ENCODE measurements at regions of chr19 and their contacts with region 1.

Region 1: DNA sequence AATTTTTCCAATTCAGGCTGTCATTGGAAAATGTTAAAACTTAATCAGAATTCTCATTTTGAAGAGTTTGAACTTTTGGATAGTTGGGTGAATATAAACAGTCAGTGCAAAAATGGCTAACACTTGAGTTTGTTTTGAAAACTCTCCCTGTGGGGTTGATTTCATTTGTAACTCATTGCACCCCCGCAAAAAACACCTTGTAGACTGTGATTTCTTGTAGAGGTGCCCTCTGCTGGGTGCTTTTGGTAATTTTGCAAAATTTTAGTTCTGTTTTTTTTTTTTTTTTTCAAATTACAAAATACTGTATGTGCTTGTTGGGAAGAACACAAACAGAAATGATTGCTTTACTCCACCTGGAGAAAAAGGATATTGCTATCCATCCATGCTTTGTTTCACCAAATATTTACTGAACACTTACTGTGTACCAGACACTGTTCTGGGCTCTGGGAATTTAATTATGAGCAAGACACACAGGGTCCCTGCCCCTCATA is 28.2 kb upstream of the GPI start:
- DNase-seq: no peak

Region 2: GRCh38 chr19:34171877-34172660 is 164.8 kb before region 1 on chr19 and contains the start of gene LSM14A:
- intact Hi-C with region 1: loop called (anchors 5 kb)
- DNase-seq: peak; percentile 78 to 98 (median 84)

Region 3: GRCh38 chr19:34253699-34254551 is 82.9 kb before region 1 on chr19:
- intact Hi-C with region 1: loop called (anchors 10 kb)
- DNase-seq: peak; percentile 79 to 98 (median 87)